B cell (primary cell): ENCODE measurements at regions of chr17 and their contacts with region 1.

Region 1: GRCh38 chr17:57597531-57598453 is 147.3 kb downstream of the CCDC182 start:
- DNase-seq: peak; percentile 41
- ATAC-seq: no peak
- H3K4me3 ChIP-seq: no peak overlapping the region
- H3K4me3 Mint-ChIP-seq: no peak overlapping the region
- H3K27ac ChIP-seq: no peak overlapping the region
- H3K27ac Mint-ChIP-seq: peak overlapping the region; percentile 69
- H3K4me1 ChIP-seq: peaks cover 21 to 26% of the 10 kb centered on the region in 2 donors
- H3K4me1 Mint-ChIP-seq: peaks cover 31% of the 10 kb centered on the region
- H3K27me3 ChIP-seq: no peaks in the 10 kb centered on the region
- H3K27me3 Mint-ChIP-seq: no peaks in the 10 kb centered on the region
- CTCF ChIP-seq: peak; percentile 68

Region 2: GRCh38 chr17:57576744-57577143 is 21.0 kb before region 1 on chr17:
- CTCF ChIA-PET with region 1: interaction called, 7 read pairs
- POLR2A ChIA-PET with region 1: interaction called, 15 read pairs
- intact Hi-C with region 1: no loop called
- DNase-seq: no peak
- ATAC-seq: no peak
- H3K4me3 ChIP-seq: no peak overlapping the region
- H3K4me3 Mint-ChIP-seq: no peak overlapping the region
- H3K27ac ChIP-seq: no peak overlapping the region
- H3K27ac Mint-ChIP-seq: no peak overlapping the region
- H3K4me1 ChIP-seq: peaks cover 9 to 13% of the 10 kb centered on the region in 2 donors
- H3K4me1 Mint-ChIP-seq: peaks cover 19% of the 10 kb centered on the region
- H3K27me3 ChIP-seq: no peaks in the 10 kb centered on the region
- H3K27me3 Mint-ChIP-seq: no peaks in the 10 kb centered on the region
- CTCF ChIP-seq: no peak

Region 3: DNA sequence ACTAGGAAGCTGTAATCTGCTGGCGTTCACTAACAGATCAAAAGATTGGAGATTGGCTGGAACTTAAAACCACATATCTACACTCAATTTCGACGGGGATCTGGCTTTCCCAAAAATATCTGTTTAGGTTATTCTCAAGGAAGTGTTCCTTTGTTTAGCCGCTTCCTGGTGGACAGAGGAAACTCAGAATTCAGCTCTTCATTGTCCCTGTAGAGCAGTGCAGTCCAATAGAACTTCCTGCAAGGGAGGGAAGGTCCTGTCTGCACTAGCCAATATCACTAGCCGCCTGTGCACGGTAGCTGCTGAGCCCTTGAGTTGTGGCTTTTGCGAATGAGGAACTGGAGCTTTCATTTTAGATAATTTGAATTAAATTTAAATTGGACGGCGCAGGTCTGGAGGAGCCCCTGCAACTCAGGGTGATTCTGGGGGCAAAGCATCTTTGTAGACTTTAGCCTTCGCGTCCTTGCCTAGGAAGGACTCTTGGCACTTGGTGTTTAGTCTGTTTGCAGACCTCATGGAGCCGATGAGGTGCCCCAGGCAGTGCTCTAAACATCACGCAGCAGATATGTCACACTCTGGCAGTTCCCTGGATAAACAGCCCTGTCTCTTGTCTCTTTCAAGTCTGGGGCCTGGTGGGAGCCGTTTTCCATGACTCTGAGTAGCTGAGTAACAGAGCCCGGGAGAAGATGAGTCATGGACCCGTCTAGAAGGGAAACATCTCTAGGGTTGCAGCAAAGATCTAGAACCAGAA is 25.1 kb after region 1 on chr17:
- CTCF ChIA-PET with region 1: interaction called, 40 read pairs
- POLR2A ChIA-PET with region 1: interaction called, 5 read pairs
- intact Hi-C with region 1: no loop called
- DNase-seq: peak; percentile 73
- ATAC-seq: peak; percentile 78
- H3K4me3 ChIP-seq: peak overlapping the region in 4 of 5 experiments; percentile 32 to 64 (median 49)
- H3K4me3 Mint-ChIP-seq: peak overlapping the region; percentile 81
- H3K27ac ChIP-seq: peak overlapping the region; percentile 59 to 73
- H3K27ac Mint-ChIP-seq: peak overlapping the region; percentile 85
- H3K4me1 ChIP-seq: peaks cover 34 to 42% of the 10 kb centered on the region in 2 donors
- H3K4me1 Mint-ChIP-seq: peaks cover 45% of the 10 kb centered on the region
- H3K27me3 ChIP-seq: no peaks in the 10 kb centered on the region
- H3K27me3 Mint-ChIP-seq: no peaks in the 10 kb centered on the region
- CTCF ChIP-seq: no peak